ENCODE measurements at regions of chr3 and their contacts with region 1.

Region 1: DNA sequence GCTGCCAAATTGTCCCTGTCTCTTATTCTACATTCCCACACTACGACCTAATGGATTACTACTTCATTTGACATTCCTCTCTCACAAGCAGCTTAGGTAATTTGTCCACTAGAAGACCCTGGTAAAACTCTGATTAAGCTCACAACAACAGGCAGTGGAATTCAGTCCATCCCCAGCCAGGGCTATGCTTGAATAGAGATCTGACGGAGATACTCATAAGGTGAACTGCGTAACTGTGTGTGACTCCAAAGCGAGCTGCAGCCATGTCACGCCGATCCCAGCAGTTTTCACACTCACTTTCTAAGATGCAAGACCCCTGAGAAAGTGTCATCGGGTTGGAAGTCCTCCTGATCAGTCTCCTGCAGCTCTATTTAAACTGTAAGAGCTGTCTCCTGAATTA is 25.7 kb upstream of the ROBO2 start:
- DNase-seq: no peak
- H3K4me3 ChIP-seq: no peak overlapping the region
- CTCF ChIP-seq: no peak

Region 2: DNA sequence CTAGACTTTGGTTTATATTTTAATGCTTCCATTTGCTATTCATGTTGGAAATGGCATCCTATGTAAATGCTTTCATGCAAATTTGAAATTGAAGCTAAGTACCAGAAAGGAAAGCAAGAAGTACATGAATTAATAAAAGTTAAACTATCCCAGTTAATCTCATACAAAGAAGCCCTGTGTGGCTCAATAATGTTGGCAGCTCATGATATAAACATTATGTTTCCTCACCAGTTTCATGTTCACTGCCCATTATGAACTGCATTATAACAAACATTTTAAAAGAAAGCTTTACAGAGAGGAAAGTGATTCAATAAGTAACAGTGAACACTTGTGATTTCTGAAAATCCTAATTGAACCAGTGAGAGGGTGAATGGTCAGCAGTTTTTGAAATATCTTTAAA is 37.2 kb before region 1 on chr3:
- in situ Hi-C with region 1: no loop called
- DNase-seq: no peak
- H3K4me3 ChIP-seq: no peak overlapping the region
- CTCF ChIP-seq: no peak

Region 3: DNA sequence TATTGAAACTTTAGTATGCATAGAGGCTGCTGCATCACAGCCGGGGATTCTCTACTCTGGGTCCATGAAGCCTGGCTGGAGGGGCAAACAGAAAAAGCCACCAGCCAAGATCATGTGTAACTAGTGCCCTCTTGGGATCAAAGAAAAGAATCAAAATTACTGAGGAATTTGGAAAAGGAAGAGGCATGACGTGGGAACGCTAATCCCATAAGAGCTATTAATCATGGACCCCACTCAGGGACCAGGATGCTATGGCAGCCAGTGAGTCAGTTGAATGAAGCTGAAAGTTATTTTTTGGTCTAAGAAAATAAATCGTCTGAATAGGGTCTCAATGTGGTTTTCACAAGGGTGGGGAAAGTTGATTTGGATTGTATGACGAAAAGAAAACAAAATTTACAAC is 1190.8 kb after region 1 on chr3:
- in situ Hi-C with region 1: loop called (anchors 25 kb)
- DNase-seq: peak; percentile 79
- H3K4me3 ChIP-seq: no peak overlapping the region
- CTCF ChIP-seq: peak; percentile 30